H1 (cell line): ENCODE measurements at regions of chr13 and their contacts with region 1.

Region 1: GRCh38 chr13:102940143-102940542 is 94.3 kb downstream of the ERCC5 start:
- DNase-seq: peak in 1 of 2 experiments; percentile 19
- H3K4me3 ChIP-seq: no peak overlapping the region
- H3K27ac ChIP-seq: no peak overlapping the region
- H3K4me1 ChIP-seq: no peaks in the 10 kb centered on the region
- H3K27me3 ChIP-seq: peaks cover 0 to 1% (median 0%) of the 10 kb centered on the region in 4 experiments; a peak in 1 of 7 replicates
- CTCF ChIP-seq: peak; percentile 36 to 42 (median 42); a peak in 3 of 4 replicates
- EP300 ChIP-seq: peak in 1 of 2 experiments; percentile 55; a peak in 1 of 3 replicates
- POLR2A ChIP-seq: no peak
- RAD21 ChIP-seq: peak; percentile 23 to 51

Region 2: GRCh38 chr13:102825921-102826706 is 114.0 kb before region 1 on chr13:
- CTCF ChIA-PET with region 1: no interaction called
- POLR2A ChIA-PET with region 1: no interaction called
- DNase-seq: no peak
- H3K4me3 ChIP-seq: no peak overlapping the region
- H3K27ac ChIP-seq: no peak overlapping the region
- H3K4me1 ChIP-seq: peaks cover 0 to 4% (median 2%) of the 10 kb centered on the region in 4 experiments; a peak in 3 of 7 replicates
- H3K27me3 ChIP-seq: no peaks in the 10 kb centered on the region
- CTCF ChIP-seq: no peak
- EP300 ChIP-seq: no peak
- POLR2A ChIP-seq: no peak
- RAD21 ChIP-seq: no peak

Region 3: DNA sequence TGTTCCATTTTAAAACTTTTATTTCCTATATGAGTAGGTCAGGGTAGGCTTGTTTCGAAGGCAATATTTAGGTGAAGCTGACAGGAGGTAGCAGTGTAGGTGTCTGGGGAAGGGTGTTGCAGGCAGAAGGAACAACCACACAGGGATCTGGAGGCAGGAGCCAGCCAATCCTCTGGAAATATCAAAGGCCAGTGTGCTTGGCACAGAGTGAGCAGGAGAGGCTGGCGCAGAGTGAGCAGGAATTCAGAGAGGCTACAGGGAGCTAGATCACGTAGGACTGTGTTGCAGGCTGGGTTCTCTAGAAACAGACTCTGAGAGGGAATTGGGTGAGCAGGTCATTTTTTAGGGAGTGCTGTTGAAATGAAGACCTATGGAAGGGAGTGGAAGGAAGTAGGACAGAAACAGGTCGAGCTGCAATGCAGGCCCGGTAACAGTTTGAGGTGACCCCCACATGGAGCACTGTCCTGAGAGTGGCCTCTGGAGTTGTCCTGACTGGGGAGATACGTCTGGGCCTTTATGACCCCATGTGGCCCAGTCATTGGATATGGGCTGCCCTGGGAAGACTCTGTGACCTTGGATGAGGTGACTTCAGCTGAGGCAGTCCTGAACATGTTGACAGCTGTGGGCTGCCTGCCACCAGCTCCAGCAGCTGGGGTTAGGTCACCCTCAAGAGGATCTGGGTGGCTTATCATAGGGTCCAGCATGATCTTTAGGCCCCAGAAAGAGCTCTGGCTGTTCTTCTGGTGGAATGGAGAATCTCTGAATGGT is 42.6 kb before region 1 on chr13:
- CTCF ChIA-PET with region 1: no interaction called
- POLR2A ChIA-PET with region 1: no interaction called
- DNase-seq: no peak
- H3K4me3 ChIP-seq: no peak overlapping the region
- H3K27ac ChIP-seq: no peak overlapping the region
- H3K4me1 ChIP-seq: no peaks in the 10 kb centered on the region
- H3K27me3 ChIP-seq: no peaks in the 10 kb centered on the region
- CTCF ChIP-seq: no peak
- EP300 ChIP-seq: no peak
- POLR2A ChIP-seq: no peak
- RAD21 ChIP-seq: no peak

Region 4: GRCh38 chr13:103140001-103140671 is 200.0 kb after region 1 on chr13:
- CTCF ChIA-PET with region 1: interaction called, 10 read pairs
- POLR2A ChIA-PET with region 1: no interaction called
- DNase-seq: no peak
- H3K4me3 ChIP-seq: no peak overlapping the region
- H3K27ac ChIP-seq: no peak overlapping the region
- H3K4me1 ChIP-seq: no peaks in the 10 kb centered on the region
- H3K27me3 ChIP-seq: no peaks in the 10 kb centered on the region
- CTCF ChIP-seq: peak in 2 of 3 experiments; percentile 69 to 83; a peak in 3 of 4 replicates
- EP300 ChIP-seq: no peak
- POLR2A ChIP-seq: no peak
- RAD21 ChIP-seq: peak; percentile 90 to 91